ENCODE measurements at regions of chr22 and their contacts with region 1.

Region 1: DNA sequence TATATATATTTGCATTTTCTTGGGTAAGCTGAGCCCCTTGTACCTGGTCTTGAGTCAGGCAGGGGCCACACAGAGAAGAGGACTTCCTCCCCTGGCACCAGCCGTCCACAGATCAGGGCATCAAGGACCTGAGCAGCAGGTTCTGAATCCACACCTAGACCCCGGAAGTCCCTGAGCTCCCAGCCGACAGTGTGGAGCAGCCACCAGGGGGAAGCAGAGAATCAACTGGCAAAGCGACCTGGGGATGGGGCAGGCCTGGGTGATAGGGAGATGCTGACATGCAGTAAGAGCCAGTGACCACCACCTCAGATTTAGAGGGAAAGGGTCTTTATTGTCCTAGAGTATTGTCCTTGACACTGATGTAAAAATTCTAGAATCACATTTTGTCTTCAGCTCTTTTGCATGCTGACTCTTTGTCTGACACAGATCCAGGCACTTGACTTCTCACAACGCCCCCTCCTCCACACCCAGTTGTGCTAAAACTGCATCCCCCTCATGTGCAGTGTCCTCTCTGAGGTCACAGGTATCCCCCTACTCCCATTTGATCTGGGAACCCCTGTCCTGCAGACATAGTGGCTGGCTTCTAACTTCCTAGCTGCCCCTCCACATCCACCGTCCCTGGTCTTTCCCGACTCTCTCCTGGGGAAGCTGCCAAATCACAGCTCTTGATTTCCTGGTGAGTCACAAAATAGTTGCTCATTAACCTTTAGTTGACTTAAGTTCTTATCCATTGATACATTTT is 109.3 kb downstream of the GGTLC2 start:
- DNase-seq: peak; percentile 73 to 91
- ATAC-seq: peak; percentile 81 to 88 (median 88)
- H3K4me3 ChIP-seq: no peak overlapping the region
- H3K4me3 Mint-ChIP-seq: peak overlapping the region; percentile 64
- H3K27ac ChIP-seq: peak overlapping the region; percentile 39
- H3K27ac Mint-ChIP-seq: peak overlapping the region; percentile 94 to 97
- H3K4me1 ChIP-seq: peaks cover 66% of the 10 kb centered on the region
- H3K4me1 Mint-ChIP-seq: peaks cover 68 to 78% of the 10 kb centered on the region in 2 donors
- H3K27me3 ChIP-seq: no peaks in the 10 kb centered on the region
- H3K27me3 Mint-ChIP-seq: no peaks in the 10 kb centered on the region
- CTCF ChIP-seq: peak; percentile 86

Region 2: GRCh38 chr22:22474733-22475132 is 279.0 kb before region 1 on chr22:
- intact Hi-C with region 1: no loop called
- DNase-seq: no peak
- ATAC-seq: no peak
- H3K4me3 ChIP-seq: no peak overlapping the region
- H3K4me3 Mint-ChIP-seq: no peak overlapping the region
- H3K27ac ChIP-seq: no peak overlapping the region
- H3K27ac Mint-ChIP-seq: no peak overlapping the region
- H3K4me1 ChIP-seq: no peaks in the 10 kb centered on the region
- H3K4me1 Mint-ChIP-seq: no peaks in the 10 kb centered on the region
- H3K27me3 ChIP-seq: no peaks in the 10 kb centered on the region
- H3K27me3 Mint-ChIP-seq: peaks cover 0 to 5% of the 10 kb centered on the region in 2 donors
- CTCF ChIP-seq: no peak

Region 3: DNA sequence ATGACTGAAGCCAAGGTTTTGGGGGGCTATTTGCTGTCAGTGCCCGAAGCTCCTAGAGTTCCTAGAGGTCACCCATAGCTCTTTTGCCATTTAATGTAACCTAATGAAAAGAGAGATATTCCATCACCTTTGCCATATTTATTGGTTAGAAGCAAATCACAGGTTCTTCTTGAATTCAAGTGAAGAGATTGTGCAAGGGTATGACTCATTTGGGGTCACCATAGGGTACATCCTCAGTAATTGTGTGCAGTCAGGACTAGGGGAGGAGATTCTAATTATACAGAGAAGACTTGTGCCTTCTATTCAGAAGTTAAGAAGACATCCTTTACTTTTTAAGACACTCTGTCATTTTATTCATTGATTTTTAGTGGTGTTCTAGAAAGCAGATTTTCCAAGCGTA is 187.7 kb before region 1 on chr22:
- intact Hi-C with region 1: no loop called
- DNase-seq: no peak
- ATAC-seq: no peak
- H3K4me3 ChIP-seq: no peak overlapping the region
- H3K4me3 Mint-ChIP-seq: no peak overlapping the region
- H3K27ac ChIP-seq: no peak overlapping the region
- H3K27ac Mint-ChIP-seq: no peak overlapping the region
- H3K4me1 ChIP-seq: no peaks in the 10 kb centered on the region
- H3K4me1 Mint-ChIP-seq: no peaks in the 10 kb centered on the region
- H3K27me3 ChIP-seq: peaks cover 3% of the 10 kb centered on the region
- H3K27me3 Mint-ChIP-seq: peaks cover 16 to 43% of the 10 kb centered on the region in 2 donors
- CTCF ChIP-seq: no peak

Region 4: GRCh38 chr22:22787786-22788459 is 34.2 kb after region 1 on chr22:
- intact Hi-C with region 1: no loop called
- DNase-seq: peak; percentile 59 to 85
- ATAC-seq: peak; percentile 45 to 70 (median 53)
- H3K4me3 ChIP-seq: no peak overlapping the region
- H3K4me3 Mint-ChIP-seq: peak overlapping the region; percentile 17
- H3K27ac ChIP-seq: peak overlapping the region; percentile 70
- H3K27ac Mint-ChIP-seq: peak overlapping the region; percentile 88 to 92
- H3K4me1 ChIP-seq: peaks cover 58% of the 10 kb centered on the region
- H3K4me1 Mint-ChIP-seq: peaks cover 58 to 67% of the 10 kb centered on the region in 2 donors
- H3K27me3 ChIP-seq: no peaks in the 10 kb centered on the region
- H3K27me3 Mint-ChIP-seq: no peaks in the 10 kb centered on the region
- CTCF ChIP-seq: peak; percentile 67

Region 5: GRCh38 chr22:22810018-22810427 is 56.3 kb after region 1 on chr22:
- intact Hi-C with region 1: loop called (anchors 2 kb)
- DNase-seq: peak in 1 of 2 donors; percentile 93
- ATAC-seq: peak in 1 of 3 donors; percentile 81
- H3K4me3 ChIP-seq: no peak overlapping the region
- H3K4me3 Mint-ChIP-seq: no peak overlapping the region
- H3K27ac ChIP-seq: no peak overlapping the region
- H3K27ac Mint-ChIP-seq: peak overlapping the region; percentile 14 to 45
- H3K4me1 ChIP-seq: peaks cover 46% of the 10 kb centered on the region
- H3K4me1 Mint-ChIP-seq: peaks cover 40 to 50% of the 10 kb centered on the region in 2 donors
- H3K27me3 ChIP-seq: no peaks in the 10 kb centered on the region
- H3K27me3 Mint-ChIP-seq: no peaks in the 10 kb centered on the region
- CTCF ChIP-seq: no peak

Region 6: GRCh38 chr22:22877523-22878210 is 124.0 kb after region 1 on chr22:
- intact Hi-C with region 1: loop called (anchors 1 kb)
- DNase-seq: peak; percentile 74 to 86
- ATAC-seq: peak; percentile 60 to 78 (median 74)
- H3K4me3 ChIP-seq: no peak overlapping the region
- H3K4me3 Mint-ChIP-seq: no peak overlapping the region
- H3K27ac ChIP-seq: no peak overlapping the region
- H3K27ac Mint-ChIP-seq: no peak overlapping the region
- H3K4me1 ChIP-seq: peaks cover 14% of the 10 kb centered on the region
- H3K4me1 Mint-ChIP-seq: peaks cover 22 to 31% of the 10 kb centered on the region in 2 donors
- H3K27me3 ChIP-seq: no peaks in the 10 kb centered on the region
- H3K27me3 Mint-ChIP-seq: no peaks in the 10 kb centered on the region
- CTCF ChIP-seq: peak; percentile 77

Region 7: DNA sequence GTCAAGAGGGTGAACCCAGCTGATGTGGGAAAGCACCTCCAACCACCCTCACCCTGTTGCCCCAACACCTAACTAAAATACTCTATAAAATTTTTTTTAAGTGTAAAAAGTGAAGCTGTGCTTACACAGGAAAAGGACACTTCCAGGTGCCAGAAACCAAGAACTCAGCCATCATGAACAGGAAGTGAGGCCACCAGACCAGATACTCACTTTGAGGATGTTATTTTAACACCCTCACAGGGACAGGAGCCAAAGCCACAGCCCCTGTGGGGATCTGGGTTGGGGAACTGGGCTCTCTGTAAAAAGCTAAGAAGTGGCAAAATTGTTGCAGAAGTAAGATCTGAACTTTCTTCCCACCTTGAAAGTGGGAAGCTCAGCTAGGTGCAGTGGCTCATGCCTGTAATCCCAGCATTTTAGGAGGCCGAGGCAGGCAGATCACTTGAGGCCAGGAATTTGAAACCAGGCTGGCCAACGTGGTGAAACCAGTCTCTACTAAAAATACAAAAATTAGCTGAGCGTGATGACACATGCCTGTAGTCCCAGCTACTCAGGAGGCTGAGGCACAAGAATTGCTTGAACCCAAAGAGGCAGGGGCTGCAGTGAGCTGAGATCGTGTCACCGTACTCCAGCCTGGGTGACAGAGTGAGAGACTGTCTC is 384.3 kb after region 1 on chr22:
- intact Hi-C with region 1: loop called (anchors 5 kb)
- DNase-seq: peak; percentile 70 to 87
- ATAC-seq: peak; percentile 62 to 85 (median 76)
- H3K4me3 ChIP-seq: no peak overlapping the region
- H3K4me3 Mint-ChIP-seq: peak overlapping the region; percentile 87
- H3K27ac ChIP-seq: peak overlapping the region; percentile 89
- H3K27ac Mint-ChIP-seq: peak overlapping the region; percentile 96 to 99
- H3K4me1 ChIP-seq: peaks cover 92% of the 10 kb centered on the region
- H3K4me1 Mint-ChIP-seq: peaks cover 37 to 72% of the 10 kb centered on the region in 2 donors
- H3K27me3 ChIP-seq: no peaks in the 10 kb centered on the region
- H3K27me3 Mint-ChIP-seq: no peaks in the 10 kb centered on the region
- CTCF ChIP-seq: no peak